CD8-positive, alpha-beta T cell (primary cell): ENCODE measurements at regions of chr17 and their contacts with region 1.

Region 1: GRCh38 chr17:50087246-50087911 is 7.8 kb upstream of the PDK2 start:
- DNase-seq: peak; percentile 60 to 85 (median 73)
- ATAC-seq: peak; percentile 93
- H3K4me3 ChIP-seq: no peak overlapping the region
- H3K4me3 Mint-ChIP-seq: no peak overlapping the region
- H3K27ac ChIP-seq: no peak overlapping the region
- H3K27ac Mint-ChIP-seq: no peak overlapping the region
- H3K4me1 ChIP-seq: no peaks in the 10 kb centered on the region
- H3K4me1 Mint-ChIP-seq: no peaks in the 10 kb centered on the region
- H3K27me3 ChIP-seq: no peaks in the 10 kb centered on the region
- H3K27me3 Mint-ChIP-seq: no peaks in the 10 kb centered on the region
- CTCF ChIP-seq: peak; percentile 94

Region 2: GRCh38 chr17:49920064-49920785 is 167.2 kb before region 1 on chr17:
- CTCF ChIA-PET with region 1: no interaction called
- POLR2A ChIA-PET with region 1: no interaction called
- intact Hi-C with region 1: no loop called
- DNase-seq: no peak
- ATAC-seq: no peak
- H3K4me3 ChIP-seq: no peak overlapping the region
- H3K4me3 Mint-ChIP-seq: no peak overlapping the region
- H3K27ac ChIP-seq: no peak overlapping the region
- H3K27ac Mint-ChIP-seq: no peak overlapping the region
- H3K4me1 ChIP-seq: no peaks in the 10 kb centered on the region
- H3K4me1 Mint-ChIP-seq: no peaks in the 10 kb centered on the region
- H3K27me3 ChIP-seq: no peaks in the 10 kb centered on the region
- H3K27me3 Mint-ChIP-seq: peaks cover 31% of the 10 kb centered on the region
- CTCF ChIP-seq: no peak

Region 3: GRCh38 chr17:49952209-49952911 is 135.0 kb before region 1 on chr17:
- CTCF ChIA-PET with region 1: interaction called, 3 read pairs
- POLR2A ChIA-PET with region 1: no interaction called
- intact Hi-C with region 1: loop called in 1 of 2 experiments (anchors 5 kb)
- DNase-seq: peak; percentile 63 to 87 (median 82)
- ATAC-seq: peak; percentile 98
- H3K4me3 ChIP-seq: no peak overlapping the region
- H3K4me3 Mint-ChIP-seq: no peak overlapping the region
- H3K27ac ChIP-seq: no peak overlapping the region
- H3K27ac Mint-ChIP-seq: no peak overlapping the region
- H3K4me1 ChIP-seq: no peaks in the 10 kb centered on the region
- H3K4me1 Mint-ChIP-seq: no peaks in the 10 kb centered on the region
- H3K27me3 ChIP-seq: no peaks in the 10 kb centered on the region
- H3K27me3 Mint-ChIP-seq: peaks cover 42% of the 10 kb centered on the region
- CTCF ChIP-seq: peak; percentile 71

Region 4: DNA sequence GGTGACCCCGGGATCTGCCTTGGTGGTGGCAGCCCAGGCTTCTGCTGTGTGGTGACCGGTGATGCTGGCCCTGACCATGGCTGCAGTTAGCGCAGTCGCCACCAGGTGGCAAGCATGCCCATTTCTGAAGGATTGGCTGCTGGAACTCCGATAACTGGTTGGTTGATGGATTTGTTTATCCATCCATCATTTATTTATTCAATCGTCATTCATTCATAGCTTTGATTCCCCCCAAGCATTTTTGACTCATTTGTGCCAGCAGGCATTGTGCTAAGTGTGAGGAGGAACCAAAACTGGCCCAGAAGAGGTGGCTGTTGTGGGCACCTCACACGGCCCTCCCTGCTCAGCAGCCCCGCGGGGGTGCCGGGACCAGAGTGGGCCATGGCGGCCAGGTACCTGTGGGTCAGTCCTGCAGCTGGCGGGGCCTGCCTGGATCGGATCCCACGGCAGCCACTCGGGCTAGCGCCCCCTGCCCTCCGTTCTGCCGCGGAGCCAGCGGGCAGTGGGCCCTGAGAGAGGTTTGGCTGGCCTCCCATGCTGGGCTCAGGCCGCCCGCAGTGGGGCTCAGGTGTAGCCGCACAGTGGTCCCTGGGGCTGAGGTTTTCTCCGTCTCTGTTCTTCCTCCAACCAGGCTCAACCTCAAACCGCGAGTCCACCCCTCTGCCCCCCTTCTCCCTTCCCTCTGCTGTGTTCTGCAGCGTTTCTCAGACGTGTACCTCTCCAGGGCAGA is 60.3 kb before region 1 on chr17:
- CTCF ChIA-PET with region 1: interaction called, 179 read pairs
- POLR2A ChIA-PET with region 1: interaction called, 4 read pairs
- intact Hi-C with region 1: loop called in 1 of 2 experiments (anchors 1 kb)
- DNase-seq: peak; percentile 57 to 87 (median 80)
- ATAC-seq: peak; percentile 92
- H3K4me3 ChIP-seq: no peak overlapping the region
- H3K4me3 Mint-ChIP-seq: peak overlapping the region; percentile 37
- H3K27ac ChIP-seq: no peak overlapping the region
- H3K27ac Mint-ChIP-seq: no peak overlapping the region
- H3K4me1 ChIP-seq: peaks cover 8% of the 10 kb centered on the region
- H3K4me1 Mint-ChIP-seq: peaks cover 9% of the 10 kb centered on the region
- H3K27me3 ChIP-seq: peaks cover 0 to 5% of the 10 kb centered on the region in 2 experiments
- H3K27me3 Mint-ChIP-seq: peaks cover 29% of the 10 kb centered on the region
- CTCF ChIP-seq: peak; percentile 96

Region 5: GRCh38 chr17:50055426-50056230 is 31.8 kb before region 1 on chr17 and contains the start of gene ITGA3:
- CTCF ChIA-PET with region 1: interaction called, 13 read pairs
- POLR2A ChIA-PET with region 1: no interaction called
- intact Hi-C with region 1: no loop called
- DNase-seq: peak in 8 of 9 experiments; percentile 36 to 72 (median 63)
- ATAC-seq: peak; percentile 69
- H3K4me3 ChIP-seq: peak within 1 kb of the TSS; percentile 64 to 67
- H3K4me3 Mint-ChIP-seq: peak within 1 kb of the TSS; percentile 89
- H3K27ac ChIP-seq: no peak within 1 kb of the TSS
- H3K27ac Mint-ChIP-seq: peak within 1 kb of the TSS; percentile 72
- H3K4me1 ChIP-seq: peaks cover 9% of the 10 kb centered on the region
- H3K4me1 Mint-ChIP-seq: peaks cover 19% of the 10 kb centered on the region
- H3K27me3 ChIP-seq: no peaks in the 10 kb centered on the region
- H3K27me3 Mint-ChIP-seq: no peaks in the 10 kb centered on the region
- CTCF ChIP-seq: no peak
- total RNA-seq, gene ITGA3: 1.6 to 2.0 TPM

Region 6: DNA sequence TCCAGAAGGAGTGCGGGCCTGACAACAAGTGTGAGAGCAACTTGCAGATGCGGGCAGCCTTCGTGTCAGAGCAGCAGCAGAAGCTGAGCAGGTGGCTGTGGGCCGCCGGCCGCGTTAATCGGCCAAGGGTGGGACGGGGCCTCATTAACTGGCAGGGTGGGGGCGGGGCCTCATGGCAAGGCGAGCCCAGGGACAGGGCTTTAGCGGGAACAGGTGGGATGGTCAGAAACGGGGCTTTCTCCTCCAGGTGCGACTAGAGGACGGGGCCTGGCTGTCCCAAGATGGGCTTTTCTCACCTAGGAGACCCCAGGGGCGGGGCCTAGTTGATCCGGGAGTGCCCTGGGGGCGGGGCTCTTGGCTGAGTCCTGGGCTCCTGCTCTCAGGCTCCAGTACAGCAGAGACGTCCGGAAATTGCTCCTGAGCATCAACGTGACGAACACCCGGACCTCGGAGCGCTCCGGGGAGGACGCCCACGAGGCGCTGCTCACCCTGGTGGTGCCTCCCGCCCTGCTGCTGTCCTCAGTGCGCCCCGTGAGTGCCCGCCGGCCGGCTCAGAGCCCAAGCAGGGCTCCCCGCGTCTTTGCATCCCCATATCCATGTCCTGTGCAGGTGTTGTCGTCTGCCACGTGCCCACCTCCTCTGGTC is 10.7 kb before region 1 on chr17:
- CTCF ChIA-PET with region 1: interaction called, 20 read pairs
- POLR2A ChIA-PET with region 1: no interaction called
- intact Hi-C with region 1: no loop called
- DNase-seq: no peak
- ATAC-seq: no peak
- H3K4me3 ChIP-seq: no peak overlapping the region
- H3K4me3 Mint-ChIP-seq: no peak overlapping the region
- H3K27ac ChIP-seq: no peak overlapping the region
- H3K27ac Mint-ChIP-seq: no peak overlapping the region
- H3K4me1 ChIP-seq: no peaks in the 10 kb centered on the region
- H3K4me1 Mint-ChIP-seq: no peaks in the 10 kb centered on the region
- H3K27me3 ChIP-seq: no peaks in the 10 kb centered on the region
- H3K27me3 Mint-ChIP-seq: no peaks in the 10 kb centered on the region
- CTCF ChIP-seq: no peak